ENCODE measurements at regions of chr11 and their contacts with region 1.

Region 1: GRCh38 chr11:34585735-34586487 is 35.0 kb upstream of the EHF start:
- DNase-seq: peak in 4 of 5 donors; percentile 19 to 39 (median 38)
- H3K4me3 ChIP-seq: no peak overlapping the region
- H3K4me3 Mint-ChIP-seq: no peak overlapping the region
- H3K27ac ChIP-seq: no peak overlapping the region
- H3K27ac Mint-ChIP-seq: no peak overlapping the region
- H3K4me1 ChIP-seq: no peaks in the 10 kb centered on the region
- H3K4me1 Mint-ChIP-seq: peaks cover 0 to 3% (median 0%) of the 10 kb centered on the region in 4 donors
- H3K27me3 ChIP-seq: no peaks in the 10 kb centered on the region
- H3K27me3 Mint-ChIP-seq: peaks cover 3 to 6% of the 10 kb centered on the region in 2 donors

Region 2: DNA sequence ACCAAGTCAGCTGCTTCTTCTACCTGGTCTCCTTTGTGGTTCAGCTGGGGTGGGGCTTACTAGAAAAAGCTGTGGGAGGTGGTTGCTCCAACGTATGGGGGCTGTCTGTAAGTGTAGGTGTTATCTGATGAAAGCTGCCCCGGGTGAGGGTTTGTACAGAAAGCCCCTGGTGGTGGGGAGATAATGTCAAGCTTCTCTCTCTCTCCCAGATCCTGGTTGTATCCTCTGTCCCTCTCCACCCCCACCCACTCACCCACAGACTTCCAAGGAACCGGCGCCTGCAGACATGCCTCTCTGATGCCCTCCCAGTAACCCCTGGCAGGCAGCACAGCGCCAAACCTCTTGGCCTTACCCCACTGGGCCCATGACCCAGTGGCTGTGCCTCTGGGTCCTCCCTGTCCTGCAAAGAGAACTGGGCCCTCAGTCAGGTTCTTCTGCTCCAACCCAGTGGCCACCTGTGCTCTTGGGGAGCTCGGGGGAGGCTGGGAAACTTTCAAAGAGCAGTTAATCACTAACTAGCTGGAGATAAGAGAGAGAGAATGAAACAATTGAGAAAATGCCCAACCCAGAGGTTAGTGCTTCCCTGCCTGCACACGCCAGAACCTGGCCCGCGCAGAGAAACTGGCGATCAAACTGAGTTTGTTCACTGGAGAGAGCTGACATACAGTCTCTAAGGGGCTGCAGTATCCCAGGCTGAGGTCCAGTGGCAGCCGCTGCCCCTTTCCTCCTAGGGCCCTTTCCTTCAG is 14.6 kb after region 1 on chr11:
- CTCF ChIA-PET with region 1: interaction called, 18 read pairs
- POLR2A ChIA-PET with region 1: no interaction called
- intact Hi-C with region 1: no loop called
- DNase-seq: no peak
- H3K4me3 ChIP-seq: no peak overlapping the region
- H3K4me3 Mint-ChIP-seq: peak overlapping the region in 1 of 8 donors; percentile 46
- H3K27ac ChIP-seq: no peak overlapping the region
- H3K27ac Mint-ChIP-seq: peak overlapping the region in 1 of 7 donors; percentile 42
- H3K4me1 ChIP-seq: peaks cover 13% of the 10 kb centered on the region
- H3K4me1 Mint-ChIP-seq: peaks cover 6 to 19% (median 11%) of the 10 kb centered on the region in 4 donors
- H3K27me3 ChIP-seq: no peaks in the 10 kb centered on the region
- H3K27me3 Mint-ChIP-seq: peaks cover 2 to 4% of the 10 kb centered on the region in 2 donors

Region 3: GRCh38 chr11:34890812-34891211 is 304.9 kb after region 1 on chr11:
- CTCF ChIA-PET with region 1: interaction called, 12 read pairs
- POLR2A ChIA-PET with region 1: no interaction called
- intact Hi-C with region 1: loop called (anchors 1 kb)
- DNase-seq: peak in 3 of 5 donors; percentile 3 to 6 (median 6)
- H3K4me3 ChIP-seq: no peak overlapping the region
- H3K4me3 Mint-ChIP-seq: no peak overlapping the region
- H3K27ac ChIP-seq: no peak overlapping the region
- H3K27ac Mint-ChIP-seq: no peak overlapping the region
- H3K4me1 ChIP-seq: no peaks in the 10 kb centered on the region
- H3K4me1 Mint-ChIP-seq: no peaks in the 10 kb centered on the region
- H3K27me3 ChIP-seq: no peaks in the 10 kb centered on the region
- H3K27me3 Mint-ChIP-seq: no peaks in the 10 kb centered on the region

Region 4: DNA sequence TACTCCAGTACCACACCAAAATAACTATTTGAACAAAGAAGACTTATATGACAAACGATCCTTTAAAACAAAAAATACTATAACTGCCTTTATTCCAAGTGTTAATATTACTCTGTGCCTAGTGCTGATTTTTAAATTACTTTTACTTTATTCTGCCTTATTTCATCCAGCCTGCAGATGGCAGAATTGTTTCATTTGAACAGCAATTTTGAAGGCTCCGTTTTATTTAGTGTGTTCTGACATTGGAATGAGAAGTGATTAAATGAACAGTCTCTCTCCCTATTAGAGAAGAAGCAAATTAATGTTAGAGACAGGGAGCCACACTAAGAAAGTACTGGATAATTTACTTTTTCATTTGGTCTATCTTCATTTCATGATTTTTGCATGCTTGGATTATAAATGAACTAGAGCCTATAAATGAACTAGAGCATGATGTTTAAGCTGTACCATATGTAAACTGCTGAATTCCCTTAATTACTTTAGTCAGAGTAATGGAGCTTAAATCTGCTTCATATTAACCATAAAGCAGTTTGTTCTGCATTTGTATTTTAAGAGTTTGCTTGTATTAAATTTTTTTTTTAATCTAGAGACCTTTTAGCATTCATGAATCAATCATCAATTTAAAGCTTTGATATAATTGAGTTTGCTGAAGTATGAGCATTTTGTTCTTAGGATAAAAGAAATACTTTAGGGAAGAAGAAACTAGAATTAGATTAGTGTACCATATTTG is 340.4 kb after region 1 on chr11:
- CTCF ChIA-PET with region 1: interaction called, 17 read pairs
- POLR2A ChIA-PET with region 1: no interaction called
- intact Hi-C with region 1: loop called (anchors 1 kb)
- DNase-seq: peak in 4 of 5 donors; percentile 49 to 57 (median 54)
- H3K4me3 ChIP-seq: no peak overlapping the region
- H3K4me3 Mint-ChIP-seq: no peak overlapping the region
- H3K27ac ChIP-seq: no peak overlapping the region
- H3K27ac Mint-ChIP-seq: peak overlapping the region in 1 of 7 donors; percentile 78
- H3K4me1 ChIP-seq: no peaks in the 10 kb centered on the region
- H3K4me1 Mint-ChIP-seq: peaks cover 8 to 25% (median 15%) of the 10 kb centered on the region in 4 donors
- H3K27me3 ChIP-seq: no peaks in the 10 kb centered on the region
- H3K27me3 Mint-ChIP-seq: no peaks in the 10 kb centered on the region

Region 5: GRCh38 chr11:35412285-35412684 is 826.4 kb after region 1 on chr11:
- CTCF ChIA-PET with region 1: interaction called, 9 read pairs
- POLR2A ChIA-PET with region 1: no interaction called
- intact Hi-C with region 1: loop called (anchors 1 kb)
- DNase-seq: no peak
- H3K4me3 ChIP-seq: no peak overlapping the region
- H3K4me3 Mint-ChIP-seq: no peak overlapping the region
- H3K27ac ChIP-seq: no peak overlapping the region
- H3K27ac Mint-ChIP-seq: no peak overlapping the region
- H3K4me1 ChIP-seq: no peaks in the 10 kb centered on the region
- H3K4me1 Mint-ChIP-seq: no peaks in the 10 kb centered on the region
- H3K27me3 ChIP-seq: peaks cover 15% of the 10 kb centered on the region
- H3K27me3 Mint-ChIP-seq: peaks cover 29 to 34% of the 10 kb centered on the region in 2 donors

Region 6: DNA sequence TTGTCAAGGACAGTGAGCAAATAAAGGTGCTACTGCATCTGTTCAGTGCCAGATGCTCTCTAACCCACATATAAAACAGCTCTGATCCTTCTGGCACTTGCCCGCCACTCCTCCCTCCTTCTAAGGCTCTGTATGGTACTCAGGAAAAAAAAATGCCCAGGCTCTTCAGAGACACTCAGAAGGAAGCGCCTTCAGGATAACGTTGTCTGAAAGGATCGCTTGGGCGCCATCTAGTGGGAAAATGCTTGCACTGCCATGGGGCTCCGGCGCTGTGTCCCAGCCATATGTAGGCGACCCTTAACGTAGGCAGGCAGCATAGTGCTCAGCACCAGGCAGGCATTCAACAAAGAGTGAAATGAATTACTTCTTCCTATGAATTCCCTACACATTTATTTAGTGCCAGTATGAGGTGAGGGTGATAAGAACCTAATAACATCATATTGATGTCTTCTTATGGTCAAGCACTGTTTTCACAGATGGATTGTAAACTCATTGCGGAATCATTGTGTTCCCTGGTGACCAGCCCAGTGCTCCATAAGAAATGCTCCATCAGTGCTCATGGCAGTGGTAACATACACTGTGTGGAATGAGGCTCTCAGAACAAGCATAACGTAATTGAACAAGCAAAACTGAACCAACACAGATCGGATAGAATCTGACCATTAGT is 899.9 kb after region 1 on chr11:
- CTCF ChIA-PET with region 1: interaction called, 12 read pairs
- POLR2A ChIA-PET with region 1: no interaction called
- intact Hi-C with region 1: loop called (anchors 1 kb)
- DNase-seq: peak; percentile 37 to 58 (median 53)
- H3K4me3 ChIP-seq: no peak overlapping the region
- H3K4me3 Mint-ChIP-seq: no peak overlapping the region
- H3K27ac ChIP-seq: no peak overlapping the region
- H3K27ac Mint-ChIP-seq: peak overlapping the region in 1 of 7 donors; percentile 33
- H3K4me1 ChIP-seq: no peaks in the 10 kb centered on the region
- H3K4me1 Mint-ChIP-seq: no peaks in the 10 kb centered on the region
- H3K27me3 ChIP-seq: peaks cover 15% of the 10 kb centered on the region
- H3K27me3 Mint-ChIP-seq: peaks cover 36 to 43% of the 10 kb centered on the region in 2 donors

Measured in CD4-positive, alpha-beta memory T cell (primary cell).